ENCODE measurements at regions of chr14 and their contacts with region 1.

Region 1: GRCh38 chr14:69574954-69575295 is 254 bp upstream of the CCDC177 start:
- DNase-seq: no peak
- H3K4me3 ChIP-seq: no peak overlapping the region
- CTCF ChIP-seq: no peak
- POLR2A ChIP-seq: no peak

Region 2: GRCh38 chr14:69107407-69108003 is 467.4 kb before region 1 on chr14:
- intact Hi-C with region 1: no loop called
- DNase-seq: peak in 1 of 2 donors; percentile 45
- H3K4me3 ChIP-seq: no peak overlapping the region
- CTCF ChIP-seq: no peak
- POLR2A ChIP-seq: no peak

Region 3: DNA sequence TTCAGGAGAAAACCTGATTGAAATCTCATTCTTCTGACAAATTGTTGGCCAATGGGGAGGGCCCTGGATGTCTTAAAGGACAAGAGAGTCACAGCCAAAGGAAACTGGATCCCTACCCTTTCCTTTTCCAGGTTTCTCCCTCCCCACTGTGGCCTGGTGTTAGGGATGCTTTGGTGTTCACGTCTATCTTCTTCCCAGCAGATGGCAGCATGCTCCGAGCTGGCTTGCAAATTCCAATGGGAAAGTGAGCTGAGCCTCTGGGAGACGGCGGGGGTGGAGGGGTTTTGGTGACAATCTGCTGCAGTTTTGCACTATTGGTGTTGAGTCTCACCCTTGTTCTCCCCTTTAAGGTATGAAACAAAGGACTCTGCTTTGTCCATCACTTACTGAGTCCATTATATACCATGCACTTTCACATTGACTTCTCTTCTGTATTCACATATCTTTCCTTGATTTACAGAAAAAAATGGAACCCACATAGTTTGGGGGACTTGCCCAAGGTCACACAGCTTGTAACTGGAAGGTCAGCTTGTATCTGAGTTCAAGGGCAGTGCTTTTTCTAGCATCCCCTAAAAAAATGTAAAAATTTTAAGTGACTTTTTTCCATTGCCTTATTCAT is 39.6 kb before region 1 on chr14:
- intact Hi-C with region 1: loop called (anchors 5 kb)
- DNase-seq: no peak
- H3K4me3 ChIP-seq: no peak overlapping the region
- CTCF ChIP-seq: no peak
- POLR2A ChIP-seq: no peak

Region 4: DNA sequence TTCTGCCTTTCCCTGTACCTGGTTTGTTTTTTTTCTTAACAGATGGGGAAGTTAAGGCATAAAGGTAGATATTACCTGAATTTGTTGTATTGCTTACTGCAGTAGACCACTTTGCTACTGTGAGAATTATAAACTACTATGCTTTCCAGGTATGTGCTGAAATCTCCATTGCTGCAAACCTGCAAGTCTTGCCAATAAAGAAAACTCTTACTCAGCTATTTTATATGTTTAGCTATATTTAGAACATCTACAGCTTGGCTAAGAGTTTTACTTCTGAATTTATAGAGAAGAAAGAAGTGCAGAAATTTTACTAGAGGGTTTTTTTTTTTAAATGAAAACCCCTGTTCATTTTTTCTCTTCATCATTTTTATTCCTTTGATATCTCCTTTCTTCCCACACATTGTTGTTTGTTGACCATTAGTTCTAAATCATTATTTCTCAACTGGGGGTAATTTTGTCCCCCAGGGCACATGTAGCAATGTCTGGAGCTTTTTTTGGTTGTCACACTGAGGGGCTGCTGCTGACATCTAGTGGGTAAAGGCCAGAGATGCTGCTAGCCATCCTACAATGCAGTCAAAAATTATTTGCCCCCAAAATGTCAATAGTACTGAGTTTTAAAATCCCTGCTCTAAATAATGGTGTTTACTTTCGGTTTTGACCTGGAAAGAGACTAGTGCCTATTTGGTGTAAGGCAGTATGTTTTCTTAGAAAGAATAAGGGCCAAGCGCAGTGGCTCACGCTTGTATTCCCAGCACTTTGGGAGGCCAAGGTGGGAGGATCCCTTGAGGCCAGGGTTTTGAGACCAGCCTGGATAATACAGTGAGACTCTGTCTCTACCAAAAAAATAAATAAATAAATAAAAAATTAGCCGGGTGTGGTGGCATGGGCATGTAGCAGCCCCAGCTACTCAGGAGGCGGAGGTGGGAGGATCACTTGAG is 1380.9 kb after region 1 on chr14:
- intact Hi-C with region 1: no loop called
- DNase-seq: no peak
- H3K4me3 ChIP-seq: no peak overlapping the region
- CTCF ChIP-seq: no peak
- POLR2A ChIP-seq: no peak

Measured in lower leg skin (tissue), 4 donors.